Ascending aorta (tissue), 2 donors: ENCODE measurements at regions of chr9 and their contacts with region 1.

Region 1: DNA sequence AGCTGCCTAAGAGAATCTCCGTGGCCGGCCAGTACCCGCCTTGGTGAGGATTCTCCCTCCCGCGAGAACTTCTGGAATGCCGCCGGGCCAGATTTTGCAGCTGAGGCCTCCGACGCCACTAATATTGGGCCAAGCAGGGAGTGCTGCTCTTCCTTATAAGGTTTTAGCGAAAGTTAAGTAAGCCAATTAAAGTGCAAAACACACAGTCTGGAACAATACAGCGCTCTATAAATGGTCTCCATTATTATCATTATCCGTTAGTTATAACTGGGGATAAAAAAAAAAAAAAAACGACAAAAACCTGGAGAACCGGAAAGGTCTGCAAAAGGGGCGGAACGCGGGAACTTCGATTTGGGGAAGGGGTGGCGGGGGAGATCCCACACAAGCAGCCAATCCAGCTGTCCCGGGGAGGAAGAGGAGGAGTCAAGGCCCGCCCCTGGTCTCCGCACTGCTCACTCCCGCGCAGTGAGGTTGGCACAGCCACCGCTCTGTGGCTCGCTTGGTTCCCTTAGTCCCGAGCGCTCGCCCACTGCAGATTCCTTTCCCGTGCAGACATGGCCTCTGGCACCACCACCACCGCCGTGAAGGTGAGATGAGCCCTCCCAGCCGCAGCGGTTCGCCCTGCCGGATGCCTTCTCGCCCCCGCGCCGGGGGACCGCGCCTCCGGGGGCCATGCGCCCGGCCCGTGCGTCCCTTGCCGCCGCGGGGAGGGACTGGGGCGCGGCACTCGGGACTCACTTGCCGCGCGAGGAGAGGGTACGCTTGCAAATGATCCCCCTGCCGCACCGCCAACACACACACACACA is at the start of gene MTAP:
- DNase-seq: peak; percentile 70 to 94
- H3K4me3 ChIP-seq: peak within 1 kb of the TSS; percentile 91 to 99
- H3K27ac ChIP-seq: peak within 1 kb of the TSS; percentile 87 to 91
- H3K4me1 ChIP-seq: peaks cover 0 to 10% of the 10 kb centered on the region in 2 donors
- H3K27me3 ChIP-seq: no peaks in the 10 kb centered on the region
- CTCF ChIP-seq: no peak
- total RNA-seq, gene MTAP: 34.7 TPM

Region 2: GRCh38 chr9:21789541-21790037 is 12.8 kb before region 1 on chr9:
- intact Hi-C with region 1: no loop called
- DNase-seq: peak in 1 of 2 donors; percentile 75
- H3K4me3 ChIP-seq: peak overlapping the region in 1 of 2 donors; percentile 49
- H3K27ac ChIP-seq: no peak overlapping the region
- H3K4me1 ChIP-seq: no peaks in the 10 kb centered on the region
- H3K27me3 ChIP-seq: no peaks in the 10 kb centered on the region
- CTCF ChIP-seq: peak; percentile 67 to 84 (median 80)

Region 3: GRCh38 chr9:22103650-22104575 is 301.5 kb after region 1 on chr9:
- intact Hi-C with region 1: loop called (anchors 5 kb)
- DNase-seq: no peak
- H3K4me3 ChIP-seq: no peak overlapping the region
- H3K27ac ChIP-seq: peak overlapping the region; percentile 49 to 72
- H3K4me1 ChIP-seq: peaks cover 0 to 8% of the 10 kb centered on the region in 2 donors
- H3K27me3 ChIP-seq: no peaks in the 10 kb centered on the region
- CTCF ChIP-seq: no peak

Region 4: GRCh38 chr9:22446950-22447617 is 644.7 kb after region 1 on chr9:
- intact Hi-C with region 1: loop called (anchors 5 kb)
- DNase-seq: no peak
- H3K4me3 ChIP-seq: peak overlapping the region; percentile 88 to 98
- H3K27ac ChIP-seq: peak overlapping the region; percentile 71 to 89
- H3K4me1 ChIP-seq: peaks cover 3 to 4% of the 10 kb centered on the region in 2 donors
- H3K27me3 ChIP-seq: peaks cover 4% of the 10 kb centered on the region
- CTCF ChIP-seq: peak in 1 of 3 experiments; percentile 24